ENCODE measurements at regions of chr5 and their contacts with region 1.

Region 1: GRCh38 chr5:134904630-134905245 is at the start of gene PCBD2:
- DNase-seq: peak; percentile 90 to 92 (median 91)
- H3K4me3 ChIP-seq: peak within 1 kb of the TSS; percentile 59 to 84
- H3K4me3 Mint-ChIP-seq: peak within 1 kb of the TSS; percentile 94 to 100 (median 97)
- H3K27ac ChIP-seq: peak within 1 kb of the TSS; percentile 85
- H3K27ac Mint-ChIP-seq: peak within 1 kb of the TSS; percentile 97 to 99 (median 99)
- H3K4me1 ChIP-seq: no peaks in the 10 kb centered on the region
- H3K4me1 Mint-ChIP-seq: peaks cover 4 to 9% (median 5%) of the 10 kb centered on the region in 4 donors
- H3K27me3 ChIP-seq: no peaks in the 10 kb centered on the region
- H3K27me3 Mint-ChIP-seq: no peaks in the 10 kb centered on the region
- total RNA-seq, gene PCBD2: 13.1 to 15.6 TPM

Region 2: DNA sequence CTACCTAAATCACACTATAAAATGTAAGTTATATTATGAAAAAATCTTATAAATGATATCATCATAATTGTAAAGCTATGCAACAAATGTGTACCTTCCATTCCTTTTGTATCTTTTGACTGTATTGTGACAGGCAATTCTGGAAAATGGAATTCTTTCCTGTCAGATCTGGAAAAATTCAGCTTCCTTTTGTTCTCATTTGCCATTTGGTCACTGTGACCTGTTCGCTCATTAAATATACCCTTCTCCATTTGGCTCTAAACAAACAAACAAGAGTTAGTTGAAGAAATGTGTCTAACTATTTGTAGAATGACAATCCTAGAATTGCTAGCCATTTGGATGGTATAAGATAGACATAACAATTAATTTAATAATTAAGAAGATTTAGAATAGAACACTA is 600.4 kb before region 1 on chr5:
- CTCF ChIA-PET with region 1: no interaction called
- POLR2A ChIA-PET with region 1: no interaction called
- intact Hi-C with region 1: loop called (anchors 2 kb)
- DNase-seq: no peak
- H3K4me3 ChIP-seq: no peak overlapping the region
- H3K4me3 Mint-ChIP-seq: no peak overlapping the region
- H3K27ac ChIP-seq: no peak overlapping the region
- H3K27ac Mint-ChIP-seq: no peak overlapping the region
- H3K4me1 ChIP-seq: no peaks in the 10 kb centered on the region
- H3K4me1 Mint-ChIP-seq: no peaks in the 10 kb centered on the region
- H3K27me3 ChIP-seq: no peaks in the 10 kb centered on the region
- H3K27me3 Mint-ChIP-seq: no peaks in the 10 kb centered on the region

Region 3: GRCh38 chr5:134738133-134738962 is 166.4 kb before region 1 on chr5 and contains the start of gene CAMLG:
- CTCF ChIA-PET with region 1: interaction called, 48 read pairs
- POLR2A ChIA-PET with region 1: interaction called, 73 read pairs
- intact Hi-C with region 1: loop called (anchors 1 kb)
- DNase-seq: peak; percentile 96 to 97 (median 97)
- H3K4me3 ChIP-seq: peak within 1 kb of the TSS; percentile 87 to 97
- H3K4me3 Mint-ChIP-seq: peak within 1 kb of the TSS; percentile 88 to 98 (median 94)
- H3K27ac ChIP-seq: peak within 1 kb of the TSS; percentile 86
- H3K27ac Mint-ChIP-seq: peak within 1 kb of the TSS; percentile 85 to 99 (median 97)
- H3K4me1 ChIP-seq: peaks cover 18% of the 10 kb centered on the region
- H3K4me1 Mint-ChIP-seq: peaks cover 14 to 31% (median 21%) of the 10 kb centered on the region in 4 donors
- H3K27me3 ChIP-seq: no peaks in the 10 kb centered on the region
- H3K27me3 Mint-ChIP-seq: no peaks in the 10 kb centered on the region
- total RNA-seq, gene CAMLG: 26.7 to 33.8 TPM

Region 4: DNA sequence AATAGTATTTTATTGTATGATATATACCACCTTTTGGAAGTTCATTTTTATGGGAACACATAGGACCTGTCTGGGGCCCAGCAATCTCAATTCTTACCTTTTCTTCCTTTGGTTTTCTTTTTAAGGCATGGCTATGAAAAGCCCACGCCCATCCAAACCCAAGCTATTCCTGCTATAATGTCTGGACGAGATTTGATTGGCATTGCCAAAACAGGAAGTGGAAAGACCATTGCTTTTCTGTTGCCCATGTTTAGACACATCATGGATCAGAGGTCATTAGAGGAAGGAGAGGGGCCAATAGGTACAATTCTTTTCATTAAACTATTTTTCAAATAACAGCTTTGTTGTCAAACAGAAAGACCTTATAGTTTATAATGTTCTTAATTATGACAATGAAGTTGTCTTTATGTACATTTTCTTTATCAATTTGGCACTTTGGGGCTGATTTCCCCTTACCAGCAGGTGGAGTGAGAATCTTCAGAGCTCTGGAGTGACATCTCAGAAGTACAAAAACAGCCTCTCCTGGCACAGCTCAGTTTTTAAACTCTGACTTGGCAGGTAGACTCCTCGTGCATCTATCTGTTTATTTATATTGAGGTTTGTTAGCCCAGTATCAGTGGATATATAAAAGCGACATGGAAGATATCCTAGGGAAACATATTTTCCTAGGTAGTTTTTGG is 120.4 kb before region 1 on chr5:
- CTCF ChIA-PET with region 1: interaction called, 6 read pairs
- POLR2A ChIA-PET with region 1: interaction called, 5 read pairs
- intact Hi-C with region 1: loop called (anchors 1 kb)
- DNase-seq: peak in 4 of 5 donors; percentile 4 to 22 (median 14)
- H3K4me3 ChIP-seq: no peak overlapping the region
- H3K4me3 Mint-ChIP-seq: no peak overlapping the region
- H3K27ac ChIP-seq: no peak overlapping the region
- H3K27ac Mint-ChIP-seq: peak overlapping the region in 3 of 7 donors; percentile 24 to 64 (median 59)
- H3K4me1 ChIP-seq: no peaks in the 10 kb centered on the region
- H3K4me1 Mint-ChIP-seq: no peaks in the 10 kb centered on the region
- H3K27me3 ChIP-seq: no peaks in the 10 kb centered on the region
- H3K27me3 Mint-ChIP-seq: no peaks in the 10 kb centered on the region

Region 5: DNA sequence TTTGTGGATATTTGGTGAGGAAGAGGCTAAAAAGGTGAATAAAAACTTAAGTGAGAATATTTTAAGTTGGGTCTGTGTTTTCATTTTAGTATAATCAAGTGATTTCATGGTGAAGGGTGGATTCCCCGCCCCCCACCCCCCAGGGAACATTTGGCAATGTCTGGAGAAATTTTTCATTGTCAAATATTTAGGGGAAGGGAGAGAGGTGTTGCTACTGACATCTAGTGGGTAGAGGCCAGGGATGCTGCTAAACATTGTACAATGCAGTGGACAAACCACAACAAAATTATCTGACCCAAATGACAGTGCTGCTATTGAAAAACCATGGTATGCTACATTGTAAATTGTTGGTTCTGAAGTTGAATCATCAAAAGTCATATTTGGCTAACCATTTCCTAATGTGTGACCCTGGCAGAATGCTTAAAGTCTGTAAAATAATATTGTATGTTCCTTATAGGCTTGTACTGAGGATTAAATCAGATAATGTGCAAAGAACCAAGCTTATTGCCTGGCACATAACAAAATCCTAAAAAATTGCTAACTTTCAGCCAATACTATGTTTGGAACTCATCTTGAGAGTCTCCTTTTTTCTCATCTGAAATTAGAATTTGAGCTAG is 53.3 kb before region 1 on chr5:
- CTCF ChIA-PET with region 1: interaction called, 5 read pairs
- POLR2A ChIA-PET with region 1: interaction called, 8 read pairs
- intact Hi-C with region 1: loop called (anchors 2 kb)
- DNase-seq: no peak
- H3K4me3 ChIP-seq: no peak overlapping the region
- H3K4me3 Mint-ChIP-seq: peak overlapping the region in 1 of 8 donors; percentile 30
- H3K27ac ChIP-seq: no peak overlapping the region
- H3K27ac Mint-ChIP-seq: peak overlapping the region in 5 of 7 donors; percentile 29 to 80 (median 57)
- H3K4me1 ChIP-seq: peaks cover 21% of the 10 kb centered on the region
- H3K4me1 Mint-ChIP-seq: peaks cover 15 to 58% (median 36%) of the 10 kb centered on the region in 4 donors
- H3K27me3 ChIP-seq: no peaks in the 10 kb centered on the region
- H3K27me3 Mint-ChIP-seq: no peaks in the 10 kb centered on the region

Region 6: DNA sequence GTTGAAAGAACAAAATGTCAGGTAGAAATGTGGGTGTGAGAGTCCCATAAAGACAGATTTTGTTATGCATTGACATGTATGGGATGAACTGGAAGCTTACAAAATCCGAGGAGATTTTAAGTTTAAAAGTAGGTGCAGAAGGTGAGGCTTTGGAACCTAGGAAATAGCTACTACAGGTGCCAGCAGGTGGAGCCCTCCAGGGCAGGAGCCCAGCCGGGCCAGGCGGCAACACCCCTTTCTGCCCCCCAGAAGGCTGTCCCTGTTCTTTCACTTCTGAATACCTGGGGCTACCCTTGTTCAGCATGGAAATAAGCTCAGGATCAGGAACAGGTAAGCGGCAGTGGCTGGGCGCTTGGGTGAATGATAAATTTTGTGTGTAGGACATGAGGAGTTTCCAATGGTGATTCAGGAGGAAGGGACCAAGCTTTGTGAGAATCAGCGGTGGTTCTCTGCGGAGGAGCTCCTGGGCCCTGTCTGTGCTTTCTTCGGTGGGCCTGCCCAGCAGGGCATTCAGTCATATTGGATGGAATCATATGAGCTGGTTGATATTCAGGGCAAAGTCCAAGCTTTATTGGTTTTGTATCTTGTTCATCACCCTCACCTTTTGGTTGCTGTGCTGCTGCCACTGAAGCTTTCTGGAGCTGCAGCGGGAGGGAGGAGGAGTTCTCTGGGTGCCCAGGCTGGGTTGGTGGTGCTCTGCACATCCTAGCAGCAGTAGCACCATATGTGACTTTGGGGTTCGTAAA is 12.5 kb after region 1 on chr5:
- CTCF ChIA-PET with region 1: interaction called, 14 read pairs
- POLR2A ChIA-PET with region 1: interaction called, 9 read pairs
- intact Hi-C with region 1: no loop called
- DNase-seq: no peak
- H3K4me3 ChIP-seq: no peak overlapping the region
- H3K4me3 Mint-ChIP-seq: no peak overlapping the region
- H3K27ac ChIP-seq: no peak overlapping the region
- H3K27ac Mint-ChIP-seq: peak overlapping the region in 3 of 7 donors; percentile 5 to 15 (median 13)
- H3K4me1 ChIP-seq: peaks cover 7% of the 10 kb centered on the region
- H3K4me1 Mint-ChIP-seq: peaks cover 10 to 13% (median 12%) of the 10 kb centered on the region in 4 donors
- H3K27me3 ChIP-seq: no peaks in the 10 kb centered on the region
- H3K27me3 Mint-ChIP-seq: no peaks in the 10 kb centered on the region

Region 7: GRCh38 chr5:134975078-134975715 is 70.5 kb after region 1 on chr5:
- CTCF ChIA-PET with region 1: no interaction called
- POLR2A ChIA-PET with region 1: no interaction called
- intact Hi-C with region 1: no loop called
- DNase-seq: no peak
- H3K4me3 ChIP-seq: no peak overlapping the region
- H3K4me3 Mint-ChIP-seq: no peak overlapping the region
- H3K27ac ChIP-seq: no peak overlapping the region
- H3K27ac Mint-ChIP-seq: no peak overlapping the region
- H3K4me1 ChIP-seq: no peaks in the 10 kb centered on the region
- H3K4me1 Mint-ChIP-seq: no peaks in the 10 kb centered on the region
- H3K27me3 ChIP-seq: no peaks in the 10 kb centered on the region
- H3K27me3 Mint-ChIP-seq: no peaks in the 10 kb centered on the region

Region 8: GRCh38 chr5:135162661-135163265 is 258.0 kb after region 1 on chr5:
- CTCF ChIA-PET with region 1: no interaction called
- POLR2A ChIA-PET with region 1: no interaction called
- intact Hi-C with region 1: no loop called
- DNase-seq: no peak
- H3K4me3 ChIP-seq: no peak overlapping the region
- H3K4me3 Mint-ChIP-seq: no peak overlapping the region
- H3K27ac ChIP-seq: no peak overlapping the region
- H3K27ac Mint-ChIP-seq: no peak overlapping the region
- H3K4me1 ChIP-seq: no peaks in the 10 kb centered on the region
- H3K4me1 Mint-ChIP-seq: no peaks in the 10 kb centered on the region
- H3K27me3 ChIP-seq: no peaks in the 10 kb centered on the region
- H3K27me3 Mint-ChIP-seq: peaks cover 6 to 17% of the 10 kb centered on the region in 2 donors

Measured in CD4-positive, alpha-beta memory T cell (primary cell).